ENCODE measurements at regions of chr14 and their contacts with region 1.

Region 1: DNA sequence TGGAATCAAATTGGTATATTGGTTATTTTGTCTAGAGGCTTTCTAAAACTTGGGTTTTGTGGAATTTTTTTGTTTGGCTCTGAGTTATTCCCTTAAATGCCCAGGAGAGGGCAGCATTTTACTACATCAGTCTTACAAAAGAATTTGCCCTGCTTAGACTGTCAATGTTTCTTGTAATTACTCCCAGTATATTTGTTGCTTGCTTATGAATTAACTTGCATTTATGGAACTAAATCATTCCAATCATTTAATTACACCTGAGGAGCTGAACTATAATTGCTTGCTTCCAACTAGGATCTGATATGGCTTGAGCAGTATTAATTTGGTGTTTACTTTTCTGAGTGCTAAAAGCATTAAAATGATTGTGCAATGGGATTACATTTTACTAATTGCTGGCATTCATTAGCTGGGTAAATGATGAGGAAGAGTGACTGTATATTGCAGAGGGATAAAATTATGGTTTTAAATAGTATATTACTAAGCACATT is 48.7 kb downstream of the MIPOL1 start:
- DNase-seq: no peak
- ATAC-seq: peak; percentile 71
- H3K4me3 ChIP-seq: no peak overlapping the region
- H3K4me1 ChIP-seq: no peaks in the 10 kb centered on the region
- CTCF ChIP-seq: peak; percentile 37

Region 2: DNA sequence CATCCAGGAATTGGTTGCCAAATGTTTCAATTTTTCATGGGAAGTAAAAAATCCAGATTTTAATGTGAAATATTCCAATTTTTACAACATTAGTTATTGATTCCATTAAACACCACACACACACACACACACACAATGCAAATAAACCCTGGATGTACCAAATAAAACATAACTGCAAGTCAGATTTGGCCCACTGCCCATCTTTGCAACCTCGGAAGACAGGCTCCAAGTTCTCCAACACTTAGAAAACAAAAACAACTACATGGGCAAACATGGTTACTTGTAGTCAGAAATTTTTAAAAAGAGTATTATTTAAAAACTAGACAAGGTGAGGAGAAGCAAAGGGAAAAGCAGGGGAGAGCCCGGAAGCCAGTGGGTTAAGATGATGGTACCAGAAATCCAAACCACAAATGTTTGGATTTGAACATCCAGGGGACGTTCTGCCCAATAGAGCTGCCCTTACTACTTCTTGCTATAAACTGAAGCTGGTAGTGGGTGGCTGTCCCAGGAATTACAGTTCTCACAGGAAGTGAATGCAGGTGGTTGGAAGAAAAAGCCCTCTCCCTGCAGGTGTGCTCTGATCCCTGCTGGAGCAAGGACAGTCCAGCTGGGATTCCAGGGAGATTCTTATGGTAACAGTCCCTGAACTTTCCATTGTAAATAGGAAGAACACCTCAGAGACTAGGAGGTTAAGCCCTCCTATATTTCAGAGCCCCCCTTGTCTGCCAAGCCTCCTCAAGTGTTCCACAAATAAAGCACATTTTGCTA is 185.8 kb before region 1 on chr14:
- intact Hi-C with region 1: no loop called
- DNase-seq: no peak
- ATAC-seq: no peak
- H3K4me3 ChIP-seq: no peak overlapping the region
- H3K4me1 ChIP-seq: no peaks in the 10 kb centered on the region
- CTCF ChIP-seq: no peak

Region 3: GRCh38 chr14:37411079-37411735 is 164.7 kb after region 1 on chr14:
- intact Hi-C with region 1: no loop called
- DNase-seq: no peak
- ATAC-seq: no peak
- H3K4me3 ChIP-seq: no peak overlapping the region
- H3K4me1 ChIP-seq: no peaks in the 10 kb centered on the region
- CTCF ChIP-seq: no peak

Region 4: GRCh38 chr14:37565550-37565949 is 319.1 kb after region 1 on chr14:
- intact Hi-C with region 1: loop called in 1 of 2 experiments (anchors 10 kb)
- DNase-seq: peak in 1 of 3 donors; percentile 63
- ATAC-seq: no peak
- H3K4me3 ChIP-seq: no peak overlapping the region
- H3K4me1 ChIP-seq: no peaks in the 10 kb centered on the region
- CTCF ChIP-seq: no peak

Region 5: GRCh38 chr14:37594238-37594914 is 347.9 kb after region 1 on chr14:
- intact Hi-C with region 1: loop called in 1 of 2 experiments (anchors 10 kb)
- DNase-seq: peak; percentile 56 to 93 (median 81)
- ATAC-seq: peak; percentile 12
- H3K4me3 ChIP-seq: peak overlapping the region; percentile 54
- H3K4me1 ChIP-seq: peaks cover 2% of the 10 kb centered on the region
- CTCF ChIP-seq: peak; percentile 59

Region 6: GRCh38 chr14:37874429-37875191 is 628.1 kb after region 1 on chr14:
- intact Hi-C with region 1: loop called in 1 of 2 experiments (anchors 10 kb)
- DNase-seq: peak; percentile 80 to 95 (median 93)
- ATAC-seq: peak; percentile 100
- H3K4me3 ChIP-seq: no peak overlapping the region
- H3K4me1 ChIP-seq: no peaks in the 10 kb centered on the region
- CTCF ChIP-seq: peak; percentile 67

Measured in mucosa of descending colon (tissue), 3 donors.